Activated CD8-positive, alpha-beta T cell treated with anti-CD3 and anti-CD28 coated beads for 36 hours (primary cell): ENCODE measurements at regions of chr5 and their contacts with region 1.

Region 1: GRCh38 chr5:174418928-174419796 is 305.2 kb upstream of the MSX2 start:
- DNase-seq: peak; percentile 92
- ATAC-seq: peak; percentile 82
- H3K4me3 Mint-ChIP-seq: peak overlapping the region; percentile 47
- H3K27ac Mint-ChIP-seq: no peak overlapping the region
- H3K4me1 Mint-ChIP-seq: peaks cover 8% of the 10 kb centered on the region
- H3K27me3 Mint-ChIP-seq: peaks cover 18% of the 10 kb centered on the region
- CTCF ChIP-seq: peak; percentile 75

Region 2: GRCh38 chr5:174172152-174172551 is 247.0 kb before region 1 on chr5:
- CTCF ChIA-PET with region 1: no interaction called
- POLR2A ChIA-PET with region 1: no interaction called
- intact Hi-C with region 1: no loop called
- DNase-seq: no peak
- ATAC-seq: no peak
- H3K4me3 Mint-ChIP-seq: no peak overlapping the region
- H3K27ac Mint-ChIP-seq: no peak overlapping the region
- H3K4me1 Mint-ChIP-seq: no peaks in the 10 kb centered on the region
- H3K27me3 Mint-ChIP-seq: peaks cover 13% of the 10 kb centered on the region
- CTCF ChIP-seq: no peak

Region 3: GRCh38 chr5:174409070-174409469 is 10.1 kb before region 1 on chr5:
- CTCF ChIA-PET with region 1: interaction called, 11 read pairs
- POLR2A ChIA-PET with region 1: no interaction called
- intact Hi-C with region 1: no loop called
- DNase-seq: no peak
- ATAC-seq: no peak
- H3K4me3 Mint-ChIP-seq: no peak overlapping the region
- H3K27ac Mint-ChIP-seq: no peak overlapping the region
- H3K4me1 Mint-ChIP-seq: no peaks in the 10 kb centered on the region
- H3K27me3 Mint-ChIP-seq: peaks cover 16% of the 10 kb centered on the region
- CTCF ChIP-seq: no peak

Region 4: GRCh38 chr5:174793684-174794328 is 374.6 kb after region 1 on chr5:
- CTCF ChIA-PET with region 1: interaction called, 68 read pairs
- POLR2A ChIA-PET with region 1: no interaction called
- intact Hi-C with region 1: loop called (anchors 2 kb)
- DNase-seq: peak; percentile 58
- ATAC-seq: peak; percentile 53
- H3K4me3 Mint-ChIP-seq: no peak overlapping the region
- H3K27ac Mint-ChIP-seq: no peak overlapping the region
- H3K4me1 Mint-ChIP-seq: no peaks in the 10 kb centered on the region
- H3K27me3 Mint-ChIP-seq: peaks cover 42% of the 10 kb centered on the region
- CTCF ChIP-seq: peak; percentile 75